ENCODE measurements at regions of chr1 and their contacts with region 1.

Region 1: DNA sequence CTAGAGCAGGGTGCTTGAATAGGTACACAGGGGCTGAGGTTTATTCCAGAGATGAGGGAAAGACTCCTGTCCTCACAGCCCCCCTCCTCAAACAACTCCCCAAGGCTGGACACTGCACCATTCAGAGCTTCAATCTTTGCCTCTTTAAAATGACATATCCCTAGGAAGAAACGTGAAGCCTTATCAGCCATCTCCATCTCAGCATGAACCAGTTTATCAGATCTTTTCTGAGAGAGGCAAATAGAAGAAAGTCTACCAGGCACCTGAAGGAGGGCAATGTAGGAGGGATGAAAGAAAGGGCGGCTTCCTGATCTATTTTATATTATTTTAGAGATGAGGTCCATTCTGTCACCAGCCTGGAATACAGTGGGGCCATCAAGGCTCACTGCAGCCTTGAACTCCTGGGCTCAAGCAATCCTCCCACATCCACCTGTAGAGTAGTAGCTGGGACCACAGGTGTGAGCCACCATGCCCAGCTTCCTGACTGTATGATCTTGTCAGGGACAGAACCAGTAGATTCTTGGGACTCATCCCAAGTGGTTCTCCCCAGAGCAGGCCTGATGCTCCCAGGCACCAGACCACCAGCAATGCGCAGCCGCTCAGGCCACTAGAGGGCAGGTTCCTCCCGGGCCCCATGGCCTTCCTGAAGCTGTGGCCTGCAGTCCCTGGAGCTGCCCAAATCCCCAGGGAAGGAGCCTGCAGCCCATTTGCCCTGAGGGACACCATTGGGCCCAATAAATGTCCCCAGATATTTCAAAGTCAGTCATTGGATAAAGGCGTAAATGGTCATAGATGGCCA is 44.4 kb upstream of the GOLT1A start:
- DNase-seq: peak; percentile 43 to 51 (median 46)
- H3K4me3 ChIP-seq: no peak overlapping the region
- H3K27ac ChIP-seq: no peak overlapping the region
- H3K4me1 ChIP-seq: peaks cover 0 to 14% (median 3%) of the 10 kb centered on the region in 4 experiments
- H3K27me3 ChIP-seq: no peaks in the 10 kb centered on the region

Region 2: DNA sequence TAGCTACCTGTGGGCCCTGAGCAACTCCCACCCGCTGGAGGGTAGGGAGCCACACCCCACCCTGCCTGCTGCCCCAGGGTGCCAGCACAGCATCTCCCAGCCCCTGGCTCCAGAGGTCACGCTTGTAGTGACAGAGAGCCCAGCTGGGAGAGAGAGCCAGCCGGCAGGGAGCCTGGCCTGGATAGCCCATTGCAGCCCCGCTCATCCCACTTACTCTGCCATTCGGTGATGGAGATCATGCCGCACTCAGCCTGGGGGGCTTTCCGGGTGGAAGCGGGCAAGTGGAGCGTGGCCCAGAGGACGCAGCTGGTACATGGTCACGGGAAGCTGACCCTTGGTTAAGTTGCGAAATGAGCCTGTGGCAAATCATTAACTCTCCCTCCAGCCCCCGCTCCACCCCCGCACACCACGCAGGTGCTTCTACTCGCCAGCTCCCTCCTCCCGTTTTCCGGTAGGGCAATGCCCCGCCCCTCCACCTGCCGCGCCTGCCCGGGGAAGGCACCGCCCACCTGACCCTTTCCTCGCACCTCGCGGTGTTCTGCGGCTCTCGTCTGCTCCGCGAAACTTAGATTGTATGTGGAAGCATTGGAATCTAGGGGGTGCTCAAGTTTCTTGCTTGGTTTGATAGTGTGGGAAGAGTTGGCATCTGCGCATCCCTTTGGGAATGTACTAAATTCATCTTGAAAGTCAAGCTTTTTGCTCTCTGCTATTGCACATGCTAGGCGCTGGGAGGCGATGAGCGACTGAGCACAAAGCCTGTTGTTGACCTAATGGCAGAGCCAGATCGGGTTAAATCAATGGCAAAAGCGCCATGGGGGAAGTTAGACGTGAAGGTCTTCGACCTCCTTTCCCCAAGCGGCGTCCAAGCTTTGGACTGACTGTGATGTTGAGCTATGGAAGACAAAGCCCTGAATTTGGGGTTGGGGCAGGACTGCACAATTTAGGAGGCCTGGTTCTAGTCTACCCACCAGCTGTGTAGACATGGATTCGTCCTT is 44.2 kb before region 1 on chr1 and contains the start of gene GOLT1A:
- CTCF ChIA-PET with region 1: interaction called, 12 read pairs
- POLR2A ChIA-PET with region 1: no interaction called
- DNase-seq: peak; percentile 61 to 74 (median 70)
- H3K4me3 ChIP-seq: peak within 1 kb of the TSS; percentile 13 to 75 (median 35)
- H3K27ac ChIP-seq: no peak within 1 kb of the TSS
- H3K4me1 ChIP-seq: peaks cover 0 to 19% (median 16%) of the 10 kb centered on the region in 4 experiments
- H3K27me3 ChIP-seq: no peaks in the 10 kb centered on the region

Region 3: GRCh38 chr1:204285406-204286305 is 27.5 kb after region 1 on chr1:
- CTCF ChIA-PET with region 1: interaction called, 15 read pairs
- POLR2A ChIA-PET with region 1: no interaction called
- DNase-seq: no peak
- H3K4me3 ChIP-seq: peak overlapping the region in 2 of 7 experiments; percentile 56 to 64
- H3K27ac ChIP-seq: peak overlapping the region; percentile 10 to 70
- H3K4me1 ChIP-seq: peaks cover 14 to 61% (median 52%) of the 10 kb centered on the region in 4 experiments
- H3K27me3 ChIP-seq: no peaks in the 10 kb centered on the region

Region 4: DNA sequence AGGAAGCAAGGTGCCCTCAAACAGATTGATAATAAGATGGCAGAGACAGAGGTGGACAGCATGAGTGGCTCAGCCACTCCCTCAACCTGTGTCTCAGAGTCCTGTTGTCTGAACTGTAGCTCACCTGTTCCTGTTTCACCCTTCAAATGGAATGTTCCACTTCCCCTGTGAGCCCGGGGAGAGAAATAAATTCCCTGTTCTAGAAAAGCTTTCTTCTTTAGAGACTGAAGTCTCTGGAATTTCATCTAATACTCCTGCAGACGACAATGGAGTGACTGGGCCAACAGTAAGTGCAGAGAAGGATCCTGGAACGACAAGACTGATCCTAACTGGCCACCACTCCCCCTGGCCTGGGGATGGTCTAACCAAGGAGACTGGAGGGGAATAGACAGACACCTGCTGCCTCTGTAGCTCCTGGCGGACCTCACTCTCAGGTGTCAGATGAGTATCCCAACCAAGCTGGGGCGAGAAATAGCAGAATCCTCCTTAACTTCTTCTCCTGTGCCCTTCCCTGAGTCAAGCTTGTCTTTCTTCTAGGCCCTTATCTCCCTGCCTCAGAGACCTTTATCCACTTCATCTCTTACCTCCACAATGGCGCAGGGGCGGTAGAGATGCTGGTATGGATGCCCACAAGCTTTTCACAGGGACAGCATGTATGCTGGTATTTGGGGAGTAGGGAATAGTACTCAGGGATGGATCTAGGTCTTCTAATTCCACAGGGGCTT is 56.2 kb after region 1 on chr1:
- CTCF ChIA-PET with region 1: interaction called, 10 read pairs
- POLR2A ChIA-PET with region 1: no interaction called
- DNase-seq: peak in 2 of 3 donors; percentile 22 to 50
- H3K4me3 ChIP-seq: peak overlapping the region in 2 of 7 experiments; percentile 10 to 39
- H3K27ac ChIP-seq: no peak overlapping the region
- H3K4me1 ChIP-seq: peaks cover 0 to 37% (median 21%) of the 10 kb centered on the region in 4 experiments
- H3K27me3 ChIP-seq: no peaks in the 10 kb centered on the region

Region 5: DNA sequence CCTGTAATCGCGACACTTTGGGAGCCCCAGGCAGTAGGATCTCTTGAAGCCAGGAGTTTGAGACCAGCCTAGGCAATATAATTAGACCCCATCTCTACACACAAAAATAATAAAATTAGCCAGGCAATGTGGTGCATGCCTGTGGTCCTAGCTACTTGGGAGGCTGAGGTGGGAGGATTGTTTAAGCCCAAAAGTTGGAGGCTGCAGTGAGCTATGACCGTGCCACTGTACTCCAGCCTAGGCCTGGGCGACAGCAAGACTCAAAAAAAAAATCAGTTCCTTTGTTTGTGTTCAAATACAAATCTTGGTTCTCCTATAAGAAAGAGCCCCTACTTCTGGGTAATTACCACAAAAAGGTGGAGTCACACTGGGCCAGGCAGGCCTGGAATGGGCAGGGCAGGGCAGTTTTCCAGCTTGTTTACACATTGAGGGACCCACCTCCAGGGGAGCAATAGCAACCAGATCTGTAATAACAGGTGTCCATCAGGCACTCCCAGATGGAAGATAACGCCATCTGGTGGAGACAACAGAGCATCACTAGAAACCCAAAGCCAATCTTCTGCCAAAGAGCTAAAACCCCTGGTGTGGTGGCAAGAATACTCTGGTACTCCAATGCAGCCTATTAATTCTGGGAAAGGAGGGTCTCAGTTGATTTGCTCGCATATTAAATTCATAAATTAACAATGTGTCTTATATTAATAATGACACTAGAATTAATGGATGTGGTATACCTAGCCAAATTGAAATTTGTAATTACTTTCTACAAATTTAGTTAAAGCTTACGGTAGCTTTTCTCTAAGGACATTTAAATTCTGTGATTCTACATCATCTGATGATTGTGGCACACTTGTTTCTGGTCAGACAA is 140.3 kb after region 1 on chr1:
- CTCF ChIA-PET with region 1: interaction called, 10 read pairs
- POLR2A ChIA-PET with region 1: no interaction called
- DNase-seq: peak; percentile 89 to 90 (median 90)
- H3K4me3 ChIP-seq: no peak overlapping the region
- H3K27ac ChIP-seq: no peak overlapping the region
- H3K4me1 ChIP-seq: peaks cover 0 to 2% (median 0%) of the 10 kb centered on the region in 4 experiments
- H3K27me3 ChIP-seq: no peaks in the 10 kb centered on the region

Measured in common myeloid progenitor, CD34-positive (primary cell).